B cell (primary cell): ENCODE measurements at regions of chr16 and their contacts with region 1.

Region 1: DNA sequence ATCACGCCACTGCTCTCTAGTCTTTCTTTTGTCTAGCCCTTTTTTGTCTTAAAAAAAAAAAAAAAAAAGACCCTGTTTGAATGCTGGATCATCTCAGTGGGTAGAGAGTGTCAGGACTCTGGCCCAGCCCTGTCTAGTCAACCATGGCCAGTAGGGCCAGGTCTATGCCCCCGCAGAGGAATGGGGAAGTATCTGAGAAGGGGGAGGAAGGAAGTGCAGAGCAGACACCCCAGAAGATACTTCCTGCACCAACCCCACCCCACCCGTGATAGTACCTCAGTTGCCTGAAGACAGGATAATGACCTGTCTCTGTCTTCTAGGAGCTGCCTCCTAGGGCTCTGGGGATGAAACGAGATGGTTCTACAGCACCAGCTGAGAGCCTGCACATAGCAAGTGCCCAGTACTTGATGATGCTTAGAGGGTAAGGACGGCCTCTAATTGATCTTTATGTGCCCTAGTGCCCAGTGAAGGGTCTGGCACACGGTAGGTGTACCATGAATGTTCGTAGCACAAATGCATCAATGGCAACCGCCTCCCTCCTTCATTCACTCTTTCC is 55.4 kb downstream of the ABAT start:
- DNase-seq: peak; percentile 67
- ATAC-seq: peak; percentile 100
- H3K4me3 ChIP-seq: peak overlapping the region in 2 of 5 experiments; percentile 32 to 44
- H3K4me3 Mint-ChIP-seq: peak overlapping the region; percentile 78
- H3K27ac ChIP-seq: peak overlapping the region; percentile 4 to 77
- H3K27ac Mint-ChIP-seq: peak overlapping the region; percentile 88
- H3K4me1 ChIP-seq: peaks cover 19 to 44% of the 10 kb centered on the region in 2 donors
- H3K4me1 Mint-ChIP-seq: peaks cover 60% of the 10 kb centered on the region
- H3K27me3 ChIP-seq: no peaks in the 10 kb centered on the region
- H3K27me3 Mint-ChIP-seq: no peaks in the 10 kb centered on the region
- CTCF ChIP-seq: no peak

Region 2: GRCh38 chr16:8674413-8675022 is 55.3 kb before region 1 on chr16 and contains the start of gene ABAT:
- CTCF ChIA-PET with region 1: no interaction called
- POLR2A ChIA-PET with region 1: no interaction called
- intact Hi-C with region 1: loop called (anchors 2 kb)
- DNase-seq: peak; percentile 90
- ATAC-seq: peak; percentile 100
- H3K4me3 ChIP-seq: peak within 1 kb of the TSS; percentile 71 to 99 (median 81)
- H3K4me3 Mint-ChIP-seq: peak within 1 kb of the TSS; percentile 92
- H3K27ac ChIP-seq: peak within 1 kb of the TSS; percentile 51 to 83
- H3K27ac Mint-ChIP-seq: peak within 1 kb of the TSS; percentile 86
- H3K4me1 ChIP-seq: peaks cover 17 to 18% of the 10 kb centered on the region in 2 donors
- H3K4me1 Mint-ChIP-seq: peaks cover 24% of the 10 kb centered on the region
- H3K27me3 ChIP-seq: no peaks in the 10 kb centered on the region
- H3K27me3 Mint-ChIP-seq: no peaks in the 10 kb centered on the region
- CTCF ChIP-seq: no peak
- total RNA-seq, gene ABAT: 13.8 and 14.3 TPM in 2 replicates

Region 3: DNA sequence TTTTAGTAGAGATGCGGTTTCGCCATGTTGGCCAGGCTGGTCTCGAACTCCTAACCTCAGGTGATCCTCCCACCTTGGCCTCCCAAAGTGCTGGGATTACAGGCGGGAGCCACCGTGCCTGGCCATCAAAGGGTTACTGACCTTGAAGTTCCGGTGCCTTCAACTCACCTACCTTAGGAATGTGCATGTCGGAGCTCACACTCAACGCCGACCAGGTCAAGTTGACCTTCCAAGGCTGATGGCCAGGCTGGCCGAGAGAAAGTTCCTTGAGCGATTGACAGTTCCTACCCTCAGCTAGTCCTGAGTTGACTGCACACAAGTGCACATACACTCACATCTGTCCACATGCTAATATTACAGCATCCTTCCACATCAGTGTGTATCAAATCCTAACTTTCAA is 56.5 kb after region 1 on chr16:
- CTCF ChIA-PET with region 1: no interaction called
- POLR2A ChIA-PET with region 1: no interaction called
- intact Hi-C with region 1: no loop called
- DNase-seq: no peak
- ATAC-seq: no peak
- H3K4me3 ChIP-seq: no peak overlapping the region
- H3K4me3 Mint-ChIP-seq: no peak overlapping the region
- H3K27ac ChIP-seq: no peak overlapping the region
- H3K27ac Mint-ChIP-seq: no peak overlapping the region
- H3K4me1 ChIP-seq: no peaks in the 10 kb centered on the region
- H3K4me1 Mint-ChIP-seq: no peaks in the 10 kb centered on the region
- H3K27me3 ChIP-seq: no peaks in the 10 kb centered on the region
- H3K27me3 Mint-ChIP-seq: no peaks in the 10 kb centered on the region
- CTCF ChIP-seq: no peak